ENCODE measurements at regions of chr2 and their contacts with region 1.

Region 1: GRCh38 chr2:198296665-198297308 is 492.4 kb downstream of the PLCL1 start:
- DNase-seq: peak in 4 of 5 donors; percentile 79 to 92 (median 86)
- H3K4me3 ChIP-seq: no peak overlapping the region
- H3K27ac ChIP-seq: no peak overlapping the region
- H3K4me1 ChIP-seq: no peaks in the 10 kb centered on the region
- H3K27me3 ChIP-seq: no peaks in the 10 kb centered on the region
- CTCF ChIP-seq: peak; percentile 75

Region 2: GRCh38 chr2:197799068-197799467 is 497.7 kb before region 1 on chr2:
- intact Hi-C with region 1: loop called (anchors 10 kb)
- DNase-seq: no peak
- H3K4me3 ChIP-seq: no peak overlapping the region
- H3K27ac ChIP-seq: no peak overlapping the region
- H3K4me1 ChIP-seq: peaks cover 0 to 6% (median 2%) of the 10 kb centered on the region in 3 donors
- H3K27me3 ChIP-seq: no peaks in the 10 kb centered on the region
- CTCF ChIP-seq: no peak

Measured in kidney (tissue), 22 donors.